IMR-90 (cell line): ENCODE measurements at regions of chr1 and their contacts with region 1.

Region 1: DNA sequence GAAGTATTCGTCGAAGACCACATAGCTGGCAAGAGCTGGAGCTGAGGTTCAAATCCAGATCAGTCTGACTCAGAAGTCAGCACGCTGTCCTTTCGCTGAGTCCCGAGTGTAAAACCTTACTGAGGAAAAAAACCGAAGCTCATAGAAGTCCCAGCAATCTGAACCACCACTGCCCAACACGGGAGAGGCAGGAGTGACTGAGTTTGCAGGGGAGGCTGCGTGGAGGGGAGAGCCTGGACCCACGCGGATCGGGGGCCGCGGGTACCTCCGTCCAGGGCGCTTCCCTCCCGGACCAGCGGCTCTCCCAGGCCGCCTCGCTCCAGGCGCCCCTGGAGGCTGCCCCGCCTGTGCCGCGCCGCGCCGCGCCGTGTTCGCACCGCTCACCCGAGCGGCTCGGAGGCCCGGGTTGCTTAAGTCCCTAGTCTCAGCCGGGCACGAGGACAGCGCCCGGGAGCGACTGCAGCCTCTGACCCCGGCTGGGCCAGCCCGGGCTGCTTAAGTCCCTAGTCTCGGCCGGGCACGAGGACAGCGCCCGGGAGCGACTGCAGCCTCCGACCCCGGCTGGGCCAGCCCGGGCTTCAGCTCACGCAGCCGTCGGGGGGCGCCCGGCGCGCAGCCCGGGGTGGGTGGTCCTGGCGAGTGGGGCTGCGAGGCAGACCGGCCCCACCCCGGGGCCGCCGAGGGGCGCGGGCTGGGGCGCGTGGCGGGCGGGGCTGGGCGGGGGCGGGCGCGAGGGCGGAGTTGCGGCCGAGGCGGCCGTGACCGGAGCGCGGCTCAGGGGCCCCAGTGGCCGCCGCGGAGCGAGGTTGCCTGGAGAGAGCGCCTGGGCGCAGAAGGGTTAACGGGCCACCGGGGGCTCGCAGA is at the start of gene ADAMTSL4:
- DNase-seq: peak; percentile 78
- ATAC-seq: peak; percentile 72
- H3K4me3 ChIP-seq: peak within 1 kb of the TSS; percentile 50
- H3K27ac ChIP-seq: peak within 1 kb of the TSS; percentile 59
- H3K4me1 ChIP-seq: peaks cover 26% of the 10 kb centered on the region
- H3K27me3 ChIP-seq: no peaks in the 10 kb centered on the region
- CTCF ChIP-seq: peak; percentile 20; the same call in 1 of the 2 replicates
- POLR2A ChIP-seq: peak; percentile 12; the same call in 1 of the 2 replicates
- RAD21 ChIP-seq: no peak
- total RNA-seq, gene ADAMTSL4: 0.54 and 0.56 TPM in 2 replicates

Region 2: DNA sequence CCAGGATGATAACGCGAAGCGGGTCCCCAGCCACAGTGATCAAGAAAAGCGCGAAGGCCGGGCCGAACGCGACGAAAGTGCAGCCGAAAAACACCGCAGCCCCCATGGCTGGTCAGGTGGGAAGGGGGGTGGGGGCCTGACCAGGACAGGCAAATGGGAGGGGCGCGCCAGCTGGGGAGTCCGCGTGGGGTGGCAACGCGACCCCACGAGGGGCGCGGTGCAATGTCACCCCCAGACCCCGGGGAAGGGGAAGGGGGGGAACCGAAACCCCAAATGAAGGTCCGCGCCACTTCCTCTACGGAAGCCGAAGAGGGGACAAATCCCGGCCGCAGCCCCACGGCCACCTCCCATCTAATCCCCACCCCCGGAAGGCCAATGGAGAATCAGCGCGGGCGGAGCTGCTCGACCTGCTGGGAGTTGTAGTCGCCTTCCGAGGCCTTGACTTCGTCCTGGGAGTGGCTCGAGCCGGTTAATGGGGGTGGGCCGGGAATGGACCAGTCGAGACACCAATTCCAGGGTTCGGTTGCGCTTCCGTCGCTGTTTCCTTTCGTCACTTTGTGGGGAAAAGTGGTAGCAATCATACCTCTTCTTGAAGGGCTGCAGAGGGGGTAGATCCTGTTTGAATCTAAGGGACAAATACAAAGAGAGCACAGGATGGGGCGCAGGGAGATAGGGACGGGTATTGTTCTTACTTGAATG is 280.0 kb before region 1 on chr1 and contains the start of gene APH1A:
- CTCF ChIA-PET with region 1: no interaction called
- POLR2A ChIA-PET with region 1: no interaction called
- dilution Hi-C with region 1: no loop called
- in situ Hi-C with region 1: loop called (anchors 10 kb)
- intact Hi-C with region 1: no loop called
- DNase-seq: peak; percentile 96
- ATAC-seq: peak; percentile 97
- H3K4me3 ChIP-seq: peak within 1 kb of the TSS; percentile 93
- H3K27ac ChIP-seq: peak within 1 kb of the TSS; percentile 87
- H3K4me1 ChIP-seq: peaks cover 8% of the 10 kb centered on the region
- H3K27me3 ChIP-seq: no peaks in the 10 kb centered on the region
- CTCF ChIP-seq: no peak
- POLR2A ChIP-seq: no peak
- RAD21 ChIP-seq: no peak
- total RNA-seq, gene APH1A: 61.9 and 62.0 TPM in 2 replicates

Region 3: DNA sequence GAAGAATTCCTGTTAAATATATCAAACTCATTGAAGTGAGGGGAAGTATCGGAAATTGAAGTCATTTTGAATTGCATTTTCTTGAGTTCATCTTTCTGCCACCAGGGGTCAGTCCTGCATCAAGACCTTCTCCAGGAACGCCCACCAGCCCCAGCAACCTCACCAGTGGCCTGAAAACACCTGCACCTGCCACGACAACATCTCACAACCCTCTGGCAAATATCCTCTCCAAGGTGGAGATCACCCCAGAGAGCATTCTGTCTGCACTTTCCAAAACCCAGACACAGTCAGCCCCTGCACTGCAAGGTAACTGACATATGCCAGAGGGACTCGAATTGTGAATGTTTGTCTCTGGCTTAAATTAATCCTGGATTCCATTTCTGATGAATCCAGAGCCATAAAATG is 84.4 kb before region 1 on chr1:
- CTCF ChIA-PET with region 1: no interaction called
- POLR2A ChIA-PET with region 1: no interaction called
- dilution Hi-C with region 1: no loop called
- in situ Hi-C with region 1: no loop called
- intact Hi-C with region 1: loop called (anchors 2 kb)
- DNase-seq: peak; percentile 63
- ATAC-seq: peak; percentile 77
- H3K4me3 ChIP-seq: no peak overlapping the region
- H3K27ac ChIP-seq: no peak overlapping the region
- H3K4me1 ChIP-seq: no peaks in the 10 kb centered on the region
- H3K27me3 ChIP-seq: no peaks in the 10 kb centered on the region
- CTCF ChIP-seq: peak; percentile 74
- POLR2A ChIP-seq: no peak
- RAD21 ChIP-seq: peak; percentile 81

Region 4: DNA sequence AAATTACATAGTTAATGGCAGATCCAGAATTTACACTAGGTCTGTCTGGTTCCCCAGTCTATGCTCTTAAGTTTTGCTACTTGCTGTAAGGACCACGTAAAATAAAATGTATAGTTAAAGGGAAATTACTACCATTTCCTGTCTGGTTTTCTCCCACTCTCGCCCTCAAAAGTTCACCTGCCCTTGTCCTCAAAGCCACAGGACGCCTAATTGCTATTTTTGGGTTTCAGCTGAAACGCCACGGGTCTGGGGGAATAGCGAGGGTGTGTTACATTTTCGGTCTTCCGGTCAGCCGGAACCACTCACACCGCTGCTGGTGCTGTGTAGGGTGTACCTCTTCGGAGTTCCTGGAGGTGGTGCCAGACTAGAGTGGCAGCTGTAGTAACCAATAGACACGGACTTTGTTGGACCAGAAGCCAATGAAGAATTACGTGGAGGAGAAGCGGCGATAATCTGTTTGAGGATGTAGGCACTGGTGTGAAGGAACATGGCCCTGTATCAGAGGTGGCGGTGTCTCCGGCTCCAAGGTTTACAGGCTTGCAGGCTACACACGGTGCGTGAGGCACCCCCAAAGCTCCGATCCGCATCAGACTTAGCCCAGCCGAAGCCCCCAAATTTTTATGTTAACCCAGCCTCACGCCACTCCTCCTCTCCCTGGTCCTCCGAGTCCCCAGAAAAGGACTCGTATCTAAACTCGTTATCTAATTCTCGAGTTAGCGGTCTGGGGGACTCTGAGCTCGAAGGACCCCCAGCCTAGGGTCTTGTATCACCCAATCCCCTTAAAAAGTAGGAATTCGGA is 61.7 kb before region 1 on chr1 and contains the start of gene TARS2:
- CTCF ChIA-PET with region 1: no interaction called
- POLR2A ChIA-PET with region 1: no interaction called
- dilution Hi-C with region 1: no loop called
- in situ Hi-C with region 1: no loop called
- intact Hi-C with region 1: loop called (anchors 2 kb)
- DNase-seq: peak; percentile 99
- ATAC-seq: peak; percentile 100
- H3K4me3 ChIP-seq: peak within 1 kb of the TSS; percentile 66
- H3K27ac ChIP-seq: peak within 1 kb of the TSS; percentile 78
- H3K4me1 ChIP-seq: no peaks in the 10 kb centered on the region; the same call in 1 of the 2 replicates
- H3K27me3 ChIP-seq: no peaks in the 10 kb centered on the region
- CTCF ChIP-seq: 0 out of 2 replicates have a peak, but pooled peaks have one; percentile 12
- POLR2A ChIP-seq: peak; percentile 52; the same call in 1 of the 2 replicates
- RAD21 ChIP-seq: no peak
- total RNA-seq, gene TARS2: 10.9 and 12.2 TPM in 2 replicates